ENCODE measurements at regions of chr16 and their contacts with region 1.

Region 1: DNA sequence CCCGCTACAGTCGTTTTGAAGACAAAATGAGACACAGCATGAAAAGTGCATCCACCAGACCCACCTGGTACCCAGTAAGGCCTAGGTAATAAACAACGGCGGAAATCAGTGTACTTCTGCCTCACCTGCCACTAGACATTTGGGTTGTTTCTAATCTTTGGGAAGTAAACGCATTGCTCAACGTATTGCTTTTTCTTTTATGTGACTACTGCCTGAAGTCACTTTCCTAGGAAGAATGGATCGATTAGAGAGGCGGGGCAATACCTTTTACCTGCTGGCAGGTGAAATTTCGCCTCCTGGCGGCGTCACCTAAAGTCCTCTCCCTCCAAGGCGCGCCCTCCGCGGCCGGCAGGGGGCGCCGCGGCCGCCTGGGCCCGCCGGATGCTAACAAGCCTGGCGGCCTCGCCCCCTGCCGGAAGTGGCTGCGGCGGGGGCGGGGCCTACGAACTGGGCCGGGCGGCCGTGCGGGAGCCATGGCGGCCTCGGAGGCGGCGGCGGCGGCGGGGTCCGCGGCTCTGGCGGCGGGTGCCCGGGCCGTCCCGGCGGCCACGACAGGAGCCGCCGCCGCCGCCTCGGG is at the start of gene ATMIN:
- DNase-seq: peak; percentile 92
- ATAC-seq: peak; percentile 95
- H3K4me3 ChIP-seq: peak within 1 kb of the TSS; percentile 66 to 73
- H3K27ac ChIP-seq: peak within 1 kb of the TSS; percentile 79
- H3K4me1 ChIP-seq: peaks cover 10 to 14% of the 10 kb centered on the region in 2 experiments; a peak in 3 of 4 replicates
- H3K27me3 ChIP-seq: no peaks in the 10 kb centered on the region
- CTCF ChIP-seq: peak; percentile 99 to 100 (median 100)
- POLR2A ChIP-seq: peak; percentile 54
- RAD21 ChIP-seq: peak; percentile 91
- total RNA-seq, gene ATMIN: 46.7 TPM

Region 2: GRCh38 chr16:80931801-80932712 is 103.4 kb before region 1 on chr16:
- CTCF ChIA-PET with region 1: no interaction called
- POLR2A ChIA-PET with region 1: no interaction called
- RAD21 ChIA-PET with region 1: no interaction called
- intact Hi-C with region 1: no loop called
- DNase-seq: no peak
- ATAC-seq: no peak
- H3K4me3 ChIP-seq: no peak overlapping the region
- H3K27ac ChIP-seq: no peak overlapping the region
- H3K4me1 ChIP-seq: peaks cover 0 to 5% of the 10 kb centered on the region in 2 experiments; a peak in 2 of 4 replicates
- H3K27me3 ChIP-seq: 0 out of 2 replicates have a peak, but pooled peaks cover 6% of the 10 kb centered on the region
- CTCF ChIP-seq: no peak
- POLR2A ChIP-seq: no peak
- RAD21 ChIP-seq: no peak

Region 3: GRCh38 chr16:81006814-81007696 is 28.4 kb before region 1 on chr16 and contains the starts of genes CENPN and CMC2:
- CTCF ChIA-PET with region 1: interaction called, 11 read pairs
- POLR2A ChIA-PET with region 1: no interaction called
- RAD21 ChIA-PET with region 1: no interaction called
- intact Hi-C with region 1: loop called (anchors 1 kb)
- DNase-seq: peak; percentile 100
- ATAC-seq: peak; percentile 89
- H3K4me3 ChIP-seq: peak within 1 kb of the TSS; percentile 53 to 93
- H3K27ac ChIP-seq: peak within 1 kb of the TSS; percentile 97
- H3K4me1 ChIP-seq: peaks cover 16 to 26% of the 10 kb centered on the region in 2 experiments
- H3K27me3 ChIP-seq: no peaks in the 10 kb centered on the region
- CTCF ChIP-seq: no peak
- POLR2A ChIP-seq: peak; percentile 92
- RAD21 ChIP-seq: no peak
- total RNA-seq, gene CENPN: 76.7 TPM
- total RNA-seq, gene CMC2: 119 TPM

Region 4: DNA sequence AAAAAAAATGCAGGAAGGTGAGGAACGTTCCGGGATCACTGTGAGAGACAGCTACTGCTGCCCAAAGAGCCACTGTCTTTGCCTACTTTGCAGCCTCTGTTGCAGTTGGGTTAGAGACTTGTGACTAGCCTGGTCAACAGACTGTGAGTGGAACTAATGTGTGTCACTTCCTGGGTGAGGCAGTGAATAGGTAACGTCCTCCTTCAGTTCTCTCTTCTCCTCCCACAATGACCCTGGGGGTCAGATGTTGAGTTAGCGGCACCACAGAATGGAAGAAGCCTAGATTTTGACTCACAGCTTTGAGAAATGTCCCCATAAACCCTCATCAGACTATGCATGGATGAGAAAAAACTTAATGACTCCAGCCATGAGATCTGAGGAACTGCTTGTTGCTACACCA is 36.3 kb after region 1 on chr16:
- CTCF ChIA-PET with region 1: interaction called, 18 read pairs
- POLR2A ChIA-PET with region 1: no interaction called
- RAD21 ChIA-PET with region 1: no interaction called
- intact Hi-C with region 1: loop called (anchors 5 kb)
- DNase-seq: peak; percentile 28
- ATAC-seq: no peak
- H3K4me3 ChIP-seq: no peak overlapping the region
- H3K27ac ChIP-seq: no peak overlapping the region
- H3K4me1 ChIP-seq: peaks cover 6 to 17% of the 10 kb centered on the region in 2 experiments
- H3K27me3 ChIP-seq: no peaks in the 10 kb centered on the region
- CTCF ChIP-seq: no peak
- POLR2A ChIP-seq: no peak
- RAD21 ChIP-seq: no peak

Region 5: GRCh38 chr16:81106811-81107503 is 71.5 kb after region 1 on chr16:
- CTCF ChIA-PET with region 1: no interaction called
- POLR2A ChIA-PET with region 1: no interaction called
- RAD21 ChIA-PET with region 1: no interaction called
- intact Hi-C with region 1: no loop called
- DNase-seq: no peak
- ATAC-seq: 0 out of 2 replicates have a peak, but pooled peaks have one; percentile 15
- H3K4me3 ChIP-seq: no peak overlapping the region
- H3K27ac ChIP-seq: no peak overlapping the region
- H3K4me1 ChIP-seq: peaks cover 0 to 14% of the 10 kb centered on the region in 2 experiments; a peak in 2 of 4 replicates
- H3K27me3 ChIP-seq: no peaks in the 10 kb centered on the region
- CTCF ChIP-seq: no peak
- POLR2A ChIP-seq: no peak
- RAD21 ChIP-seq: no peak

Region 6: DNA sequence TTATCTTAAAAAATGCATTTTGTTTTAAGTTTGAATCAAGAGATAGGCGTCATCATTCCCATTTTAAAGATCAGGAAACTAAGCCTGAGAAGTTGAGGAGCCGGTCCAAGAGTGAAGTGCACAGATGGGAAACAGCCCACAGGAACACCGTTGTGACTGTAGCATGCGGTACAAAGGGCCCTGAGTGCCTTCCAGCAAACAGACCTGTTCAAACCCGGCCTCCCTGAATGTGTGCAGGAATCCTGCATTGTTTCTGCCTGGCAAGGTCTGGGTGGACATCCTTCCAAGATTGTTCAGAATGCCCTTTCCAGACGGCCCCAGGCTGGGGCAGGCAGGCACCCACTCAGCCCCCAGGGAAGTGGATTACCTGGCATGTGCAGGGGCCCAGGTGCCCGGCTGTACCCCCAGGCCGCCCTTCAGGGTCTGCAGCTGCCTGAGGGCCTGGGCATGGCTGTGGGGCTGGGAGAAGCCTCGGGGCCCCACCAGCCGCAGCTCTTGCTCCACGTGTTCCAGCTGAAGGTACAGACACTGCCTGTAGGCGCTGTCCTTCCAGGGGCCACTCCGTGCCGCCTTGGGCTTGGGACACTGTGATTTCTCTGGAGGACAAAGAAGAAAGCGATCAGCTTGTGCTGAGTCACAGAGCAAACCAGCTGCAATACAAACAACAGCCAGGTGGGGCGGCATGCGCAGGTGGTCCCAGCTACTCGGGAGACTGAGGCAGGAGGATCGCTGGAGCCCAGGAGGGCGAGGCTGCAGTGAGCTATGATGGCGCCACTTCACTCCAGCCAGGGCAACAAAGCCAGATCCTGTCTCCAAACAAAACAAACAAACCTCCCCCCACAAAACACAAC is 105.7 kb after region 1 on chr16:
- CTCF ChIA-PET with region 1: interaction called, 3 read pairs
- POLR2A ChIA-PET with region 1: no interaction called
- RAD21 ChIA-PET with region 1: interaction called in 1 of 2 experiments, 3 read pairs
- intact Hi-C with region 1: loop called (anchors 2 kb)
- DNase-seq: peak; percentile 45
- ATAC-seq: peak; percentile 46
- H3K4me3 ChIP-seq: 0 out of 4 replicates have a peak overlapping the region, but pooled peaks of 1 of the 2 experiments have one; percentile 15
- H3K27ac ChIP-seq: peak overlapping the region; percentile 59
- H3K4me1 ChIP-seq: peaks cover 42 to 57% of the 10 kb centered on the region in 2 experiments
- H3K27me3 ChIP-seq: no peaks in the 10 kb centered on the region
- CTCF ChIP-seq: peak; percentile 38 to 90 (median 89); a peak in 5 of 6 replicates
- POLR2A ChIP-seq: no peak
- RAD21 ChIP-seq: peak; percentile 40; the same call in 1 of the 2 replicates

Region 7: GRCh38 chr16:81737885-81738786 is 702.6 kb after region 1 on chr16:
- CTCF ChIA-PET with region 1: interaction called, 3 read pairs
- POLR2A ChIA-PET with region 1: no interaction called
- RAD21 ChIA-PET with region 1: interaction called in 1 of 2 experiments, 3 read pairs
- intact Hi-C with region 1: loop called (anchors 10 kb)
- DNase-seq: peak; percentile 79
- ATAC-seq: peak; percentile 96
- H3K4me3 ChIP-seq: peak overlapping the region; percentile 6 to 27; a peak in 2 of 4 replicates
- H3K27ac ChIP-seq: no peak overlapping the region
- H3K4me1 ChIP-seq: peaks cover 3 to 11% of the 10 kb centered on the region in 2 experiments; a peak in 3 of 4 replicates
- H3K27me3 ChIP-seq: no peaks in the 10 kb centered on the region
- CTCF ChIP-seq: peak; percentile 92 to 98 (median 95)
- POLR2A ChIP-seq: no peak
- RAD21 ChIP-seq: peak; percentile 99

Measured in HCT116 (cell line).